PC-9 (cell line): ENCODE measurements at regions of chr4 and their contacts with region 1.

Region 1: GRCh38 chr4:183377491-183377890 is 55.3 kb upstream of the CLDN24 start:
- DNase-seq: no peak
- H3K4me3 ChIP-seq: no peak overlapping the region
- H3K27ac ChIP-seq: no peak overlapping the region
- H3K4me1 ChIP-seq: no peaks in the 10 kb centered on the region
- H3K27me3 ChIP-seq: no peaks in the 10 kb centered on the region; the same call in 1 of the 2 replicates
- CTCF ChIP-seq: no peak

Region 2: GRCh38 chr4:183355405-183355804 is 22.1 kb before region 1 on chr4:
- CTCF ChIA-PET with region 1: no interaction called
- POLR2A ChIA-PET with region 1: no interaction called
- intact Hi-C with region 1: loop called (anchors 1 kb)
- DNase-seq: peak in 1 of 2 experiments; percentile 47
- H3K4me3 ChIP-seq: no peak overlapping the region
- H3K27ac ChIP-seq: no peak overlapping the region
- H3K4me1 ChIP-seq: no peaks in the 10 kb centered on the region
- H3K27me3 ChIP-seq: no peaks in the 10 kb centered on the region
- CTCF ChIP-seq: no peak

Region 3: DNA sequence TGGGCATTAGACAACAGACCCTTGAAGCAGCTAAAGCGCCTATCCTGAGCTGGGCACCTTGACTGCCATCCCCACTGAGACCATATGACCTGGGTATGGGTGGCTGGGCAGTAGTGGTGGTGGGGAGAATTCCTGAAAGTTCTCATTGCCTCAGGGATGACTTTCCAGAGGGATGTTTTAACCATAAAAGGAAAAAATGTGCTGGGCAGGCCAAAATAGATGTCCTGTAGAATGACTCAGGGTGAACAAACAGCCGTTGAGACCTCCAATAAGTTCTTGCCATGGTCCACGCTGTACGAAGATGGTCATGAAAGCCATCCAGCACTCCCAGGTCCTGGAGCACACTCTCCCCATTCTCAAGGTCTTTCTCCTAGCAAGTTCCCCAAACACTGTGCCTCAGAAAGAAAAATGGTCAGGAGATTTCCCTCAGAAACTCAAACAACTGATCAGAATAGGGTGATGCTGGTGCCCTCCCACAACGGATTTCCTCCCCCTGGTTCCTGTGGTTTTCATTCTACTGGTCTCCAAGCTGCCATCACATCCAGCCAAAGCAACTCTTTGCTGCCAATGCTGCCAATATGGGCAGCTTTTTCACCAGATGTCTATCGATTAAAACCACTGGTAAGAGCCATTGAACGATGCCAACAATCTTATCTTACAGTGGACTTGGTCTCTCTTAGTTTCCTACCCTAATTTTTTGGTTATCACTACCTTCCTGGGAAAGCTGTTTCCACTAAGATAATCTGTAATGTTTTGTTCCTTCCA is 78.1 kb after region 1 on chr4:
- CTCF ChIA-PET with region 1: no interaction called
- POLR2A ChIA-PET with region 1: no interaction called
- intact Hi-C with region 1: no loop called
- DNase-seq: no peak
- H3K4me3 ChIP-seq: no peak overlapping the region
- H3K27ac ChIP-seq: no peak overlapping the region
- H3K4me1 ChIP-seq: no peaks in the 10 kb centered on the region
- H3K27me3 ChIP-seq: no peaks in the 10 kb centered on the region
- CTCF ChIP-seq: no peak